Sigmoid colon (tissue), 7 donors: ENCODE measurements at regions of chr16 and their contacts with region 1.

Region 1: DNA sequence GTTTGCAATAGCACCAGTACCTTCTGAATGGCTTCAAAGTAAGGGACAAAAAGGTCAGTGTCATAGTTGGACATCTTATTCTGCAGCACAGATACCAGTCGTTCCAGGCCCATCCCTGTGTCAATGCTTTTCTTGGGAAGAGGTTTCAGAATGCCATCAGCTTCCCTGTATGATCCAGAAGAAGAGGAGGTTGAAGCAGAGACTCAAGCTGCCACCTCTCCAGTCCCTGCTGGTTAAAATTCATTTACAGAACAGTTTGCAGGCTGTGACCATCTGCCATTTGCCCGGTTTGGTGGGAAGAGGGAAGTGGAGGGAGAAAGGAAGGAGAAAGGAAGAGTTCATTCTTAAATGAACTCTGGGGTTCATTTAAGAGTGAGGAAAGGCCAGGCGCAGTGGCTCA is 18.4 kb upstream of the EXOSC6 start:
- DNase-seq: peak; percentile 30
- H3K4me3 ChIP-seq: no peak overlapping the region
- H3K27ac ChIP-seq: no peak overlapping the region
- H3K4me1 ChIP-seq: no peaks in the 10 kb centered on the region
- H3K27me3 ChIP-seq: no peaks in the 10 kb centered on the region
- CTCF ChIP-seq: no peak
- EP300 ChIP-seq: no peak
- POLR2A ChIP-seq: no peak

Region 2: GRCh38 chr16:70548936-70549335 is 278.8 kb after region 1 on chr16:
- intact Hi-C with region 1: loop called (anchors 10 kb)
- DNase-seq: no peak
- H3K4me3 ChIP-seq: no peak overlapping the region
- H3K27ac ChIP-seq: no peak overlapping the region
- H3K4me1 ChIP-seq: no peaks in the 10 kb centered on the region
- H3K27me3 ChIP-seq: no peaks in the 10 kb centered on the region
- CTCF ChIP-seq: no peak
- EP300 ChIP-seq: no peak
- POLR2A ChIP-seq: no peak